B cell (primary cell): ENCODE measurements at regions of chr18 and their contacts with region 1.

Region 1: DNA sequence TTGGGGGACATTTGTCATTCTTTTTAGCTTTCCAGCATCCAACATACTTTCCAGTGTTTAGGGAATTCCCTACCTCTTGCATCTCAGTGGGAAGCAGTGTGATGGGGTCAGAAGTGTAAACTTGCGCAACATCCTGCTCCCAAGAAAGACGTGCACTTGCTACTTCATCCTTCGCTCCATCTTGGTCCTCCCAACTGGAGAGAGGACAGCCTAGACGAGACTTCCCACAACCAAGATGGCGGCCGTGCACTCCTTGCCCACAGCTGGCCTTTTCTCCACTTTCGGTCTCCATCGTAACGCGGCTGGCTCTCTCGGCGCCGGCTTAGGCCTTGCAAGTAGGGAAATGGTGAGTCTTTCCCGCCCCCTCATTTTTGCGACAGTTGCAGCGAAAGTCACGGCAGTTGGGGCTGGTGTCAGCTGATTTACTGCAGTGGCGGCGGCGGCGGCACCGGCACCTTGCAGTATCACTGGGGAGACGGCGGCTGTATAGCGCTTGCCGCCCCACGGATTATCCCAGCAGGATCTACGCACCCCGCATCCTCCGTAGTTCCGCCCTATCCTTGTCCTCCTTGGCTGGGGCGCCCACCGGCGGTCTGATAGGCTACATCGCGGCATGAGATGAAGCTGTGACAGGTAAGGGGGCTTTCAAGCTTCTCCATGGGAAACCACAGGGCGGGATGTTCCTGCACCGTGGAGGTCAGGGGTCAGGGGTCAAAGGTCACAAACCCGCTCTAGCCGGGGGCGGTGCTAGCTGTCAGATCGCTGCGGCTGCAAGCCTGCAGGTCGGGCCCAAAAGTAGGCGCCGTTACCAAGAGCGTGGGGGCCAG is at the start of gene WDR7:
- DNase-seq: peak; percentile 97
- ATAC-seq: peak; percentile 93
- H3K4me3 ChIP-seq: peak within 1 kb of the TSS; percentile 67 to 95 (median 84)
- H3K4me3 Mint-ChIP-seq: peak within 1 kb of the TSS; percentile 92
- H3K27ac ChIP-seq: peak within 1 kb of the TSS; percentile 52 to 88
- H3K27ac Mint-ChIP-seq: peak within 1 kb of the TSS; percentile 88
- H3K4me1 ChIP-seq: peaks cover 19 to 26% of the 10 kb centered on the region in 2 donors
- H3K4me1 Mint-ChIP-seq: peaks cover 38% of the 10 kb centered on the region
- H3K27me3 ChIP-seq: no peaks in the 10 kb centered on the region
- H3K27me3 Mint-ChIP-seq: no peaks in the 10 kb centered on the region
- CTCF ChIP-seq: no peak
- total RNA-seq, gene WDR7: 45.0 and 48.0 TPM in 2 replicates

Region 2: DNA sequence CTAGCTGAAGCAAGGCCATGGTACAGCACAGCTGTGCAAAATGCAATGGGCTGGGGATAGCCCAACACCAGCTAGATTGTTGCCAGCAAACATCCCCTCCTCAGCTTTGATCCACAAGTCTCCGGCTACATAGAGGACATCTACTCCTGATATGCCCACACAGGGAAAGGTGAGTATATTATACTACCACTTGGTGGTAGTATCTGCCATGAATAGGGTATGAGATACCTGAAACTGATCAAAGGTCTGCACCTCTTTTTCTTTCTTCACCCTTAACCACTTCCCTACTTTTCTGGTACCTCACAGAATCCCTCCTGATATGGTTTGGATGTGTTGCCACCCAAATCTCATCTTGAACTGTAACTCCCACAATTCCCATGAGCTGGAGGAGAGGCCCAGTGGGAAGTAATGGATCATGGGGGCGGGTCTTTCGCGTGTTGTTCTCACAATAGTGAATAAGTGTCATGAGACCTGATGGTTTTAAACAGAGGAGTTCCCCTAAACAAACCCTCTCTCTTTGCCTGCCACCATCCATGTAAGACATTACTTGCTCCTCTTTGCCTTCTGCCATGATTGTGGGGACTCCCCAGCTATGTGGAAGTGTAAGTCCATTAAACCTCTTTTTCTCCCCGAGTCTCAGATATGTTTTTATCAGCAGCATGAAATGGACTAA is 292.4 kb before region 1 on chr18:
- CTCF ChIA-PET with region 1: no interaction called
- POLR2A ChIA-PET with region 1: no interaction called
- intact Hi-C with region 1: no loop called
- DNase-seq: no peak
- ATAC-seq: no peak
- H3K4me3 ChIP-seq: no peak overlapping the region
- H3K4me3 Mint-ChIP-seq: no peak overlapping the region
- H3K27ac ChIP-seq: no peak overlapping the region
- H3K27ac Mint-ChIP-seq: no peak overlapping the region
- H3K4me1 ChIP-seq: no peaks in the 10 kb centered on the region
- H3K4me1 Mint-ChIP-seq: no peaks in the 10 kb centered on the region
- H3K27me3 ChIP-seq: no peaks in the 10 kb centered on the region
- H3K27me3 Mint-ChIP-seq: no peaks in the 10 kb centered on the region
- CTCF ChIP-seq: no peak

Region 3: DNA sequence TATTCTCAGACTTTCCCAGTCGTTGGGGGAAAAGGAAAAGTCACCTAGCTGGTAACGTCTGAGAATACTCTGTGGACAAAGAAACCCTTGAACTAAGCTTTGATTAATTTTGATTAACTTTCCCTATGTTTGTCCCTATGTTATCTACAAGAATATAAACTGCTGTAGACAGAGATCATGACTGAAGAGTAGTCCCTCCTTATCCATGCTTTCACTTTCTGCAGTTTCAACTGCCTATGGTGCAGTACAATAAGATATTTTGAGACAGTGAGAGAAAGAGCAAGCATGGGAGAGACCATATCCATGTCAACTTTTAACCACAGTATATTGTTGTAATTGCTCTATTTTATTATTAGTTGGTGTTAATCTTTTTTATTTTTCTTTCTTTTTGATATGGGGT is 44.5 kb before region 1 on chr18:
- CTCF ChIA-PET with region 1: no interaction called
- POLR2A ChIA-PET with region 1: no interaction called
- intact Hi-C with region 1: no loop called
- DNase-seq: no peak
- ATAC-seq: no peak
- H3K4me3 ChIP-seq: no peak overlapping the region
- H3K4me3 Mint-ChIP-seq: no peak overlapping the region
- H3K27ac ChIP-seq: no peak overlapping the region
- H3K27ac Mint-ChIP-seq: no peak overlapping the region
- H3K4me1 ChIP-seq: no peaks in the 10 kb centered on the region
- H3K4me1 Mint-ChIP-seq: no peaks in the 10 kb centered on the region
- H3K27me3 ChIP-seq: no peaks in the 10 kb centered on the region
- H3K27me3 Mint-ChIP-seq: no peaks in the 10 kb centered on the region
- CTCF ChIP-seq: no peak

Region 4: GRCh38 chr18:56638271-56639093 is 12.7 kb before region 1 on chr18 and contains the start of gene TXNL1:
- CTCF ChIA-PET with region 1: interaction called, 19 read pairs
- POLR2A ChIA-PET with region 1: interaction called, 10 read pairs
- intact Hi-C with region 1: loop called (anchors 1 kb)
- DNase-seq: peak; percentile 98
- ATAC-seq: peak; percentile 97
- H3K4me3 ChIP-seq: peak within 1 kb of the TSS; percentile 72 to 97 (median 89)
- H3K4me3 Mint-ChIP-seq: peak within 1 kb of the TSS; percentile 93
- H3K27ac ChIP-seq: peak within 1 kb of the TSS; percentile 92 to 94
- H3K27ac Mint-ChIP-seq: peak within 1 kb of the TSS; percentile 95
- H3K4me1 ChIP-seq: peaks cover 15 to 23% of the 10 kb centered on the region in 2 donors
- H3K4me1 Mint-ChIP-seq: peaks cover 46% of the 10 kb centered on the region
- H3K27me3 ChIP-seq: no peaks in the 10 kb centered on the region
- H3K27me3 Mint-ChIP-seq: no peaks in the 10 kb centered on the region
- CTCF ChIP-seq: no peak
- total RNA-seq, gene TXNL1: 39.8 and 45.4 TPM in 2 replicates

Region 5: DNA sequence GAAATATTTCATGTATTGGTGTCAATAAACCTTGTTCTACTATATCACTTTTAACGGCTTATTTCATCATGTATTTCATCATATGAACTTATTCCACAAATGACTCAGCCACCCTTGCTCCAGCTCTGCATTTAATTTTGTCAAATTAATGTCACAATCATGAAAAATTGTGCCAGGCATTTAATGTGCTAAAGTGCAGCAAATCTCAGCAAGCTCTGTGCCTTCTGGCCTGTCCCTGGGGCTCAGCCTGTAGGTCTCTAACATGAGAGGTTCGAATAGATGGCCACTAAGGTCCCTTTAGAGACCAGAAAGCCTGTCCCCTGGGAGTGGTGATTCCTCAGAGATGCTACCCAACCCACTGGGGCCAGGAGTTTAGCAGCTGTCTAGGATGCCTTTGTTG is 524.4 kb after region 1 on chr18:
- CTCF ChIA-PET with region 1: no interaction called
- POLR2A ChIA-PET with region 1: no interaction called
- intact Hi-C with region 1: no loop called
- DNase-seq: no peak
- ATAC-seq: no peak
- H3K4me3 ChIP-seq: no peak overlapping the region
- H3K4me3 Mint-ChIP-seq: no peak overlapping the region
- H3K27ac ChIP-seq: no peak overlapping the region
- H3K27ac Mint-ChIP-seq: no peak overlapping the region
- H3K4me1 ChIP-seq: no peaks in the 10 kb centered on the region
- H3K4me1 Mint-ChIP-seq: no peaks in the 10 kb centered on the region
- H3K27me3 ChIP-seq: peaks cover 0 to 2% (median 0%) of the 10 kb centered on the region in 4 experiments
- H3K27me3 Mint-ChIP-seq: peaks cover 4% of the 10 kb centered on the region
- CTCF ChIP-seq: no peak

Region 6: DNA sequence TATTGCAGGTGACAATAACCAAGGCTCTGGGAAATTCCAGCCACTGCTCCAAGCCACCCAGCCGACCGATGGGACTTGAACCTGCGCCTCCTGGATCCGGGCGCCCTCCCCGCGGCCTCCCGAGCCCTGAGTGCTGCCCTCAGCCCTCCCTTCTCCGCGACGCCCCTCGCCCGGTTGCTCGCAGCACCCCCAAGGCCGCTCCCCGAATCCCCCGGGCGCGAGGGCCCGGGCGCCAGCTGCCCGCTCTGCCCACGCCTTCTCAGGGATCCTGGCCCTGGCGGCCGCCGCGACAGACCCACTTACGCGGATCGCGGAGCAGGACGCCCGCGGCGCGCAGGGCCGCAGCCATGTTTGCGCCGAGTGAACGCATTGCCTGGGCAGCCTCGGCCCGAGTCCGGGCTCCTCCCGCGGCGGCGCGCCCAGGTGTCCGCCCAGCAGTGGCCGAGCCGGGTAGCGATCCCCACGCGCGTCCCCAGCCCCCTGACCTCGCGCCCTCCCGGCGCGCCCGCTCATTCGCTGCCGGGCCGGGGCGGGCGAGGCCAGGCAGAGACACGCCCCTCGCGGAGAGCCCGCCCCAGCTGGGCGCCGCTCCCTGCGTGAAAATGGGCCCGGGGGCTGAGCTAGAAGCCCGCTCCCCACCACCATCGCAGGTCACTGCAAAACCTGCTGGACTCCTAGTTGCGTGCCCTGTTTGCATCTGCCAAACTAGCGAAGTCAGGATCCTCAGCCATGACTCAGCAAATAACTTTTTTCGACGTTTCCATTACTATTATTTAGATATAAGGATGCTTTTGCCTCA is 935.3 kb after region 1 on chr18 and contains the start of gene FECH:
- CTCF ChIA-PET with region 1: no interaction called
- POLR2A ChIA-PET with region 1: no interaction called
- intact Hi-C with region 1: loop called (anchors 5 kb)
- DNase-seq: peak; percentile 78
- ATAC-seq: peak; percentile 97
- H3K4me3 ChIP-seq: peak within 1 kb of the TSS; percentile 53 to 67 (median 63)
- H3K4me3 Mint-ChIP-seq: peak within 1 kb of the TSS; percentile 89
- H3K27ac ChIP-seq: peak within 1 kb of the TSS in 1 of 2 donors; percentile 70
- H3K27ac Mint-ChIP-seq: peak within 1 kb of the TSS; percentile 79
- H3K4me1 ChIP-seq: peaks cover 17 to 21% of the 10 kb centered on the region in 2 donors
- H3K4me1 Mint-ChIP-seq: peaks cover 18% of the 10 kb centered on the region
- H3K27me3 ChIP-seq: no peaks in the 10 kb centered on the region
- H3K27me3 Mint-ChIP-seq: no peaks in the 10 kb centered on the region
- CTCF ChIP-seq: no peak
- total RNA-seq, gene FECH: 10.4 and 12.6 TPM in 2 replicates

Region 7: GRCh38 chr18:57621246-57621604 is 970.1 kb after region 1 on chr18:
- CTCF ChIA-PET with region 1: no interaction called
- POLR2A ChIA-PET with region 1: no interaction called
- intact Hi-C with region 1: loop called (anchors 10 kb)
- DNase-seq: no peak
- ATAC-seq: peak; percentile 4
- H3K4me3 ChIP-seq: peak overlapping the region; percentile 85 to 90 (median 89)
- H3K4me3 Mint-ChIP-seq: peak overlapping the region; percentile 93
- H3K27ac ChIP-seq: peak overlapping the region; percentile 86 to 88
- H3K27ac Mint-ChIP-seq: peak overlapping the region; percentile 95
- H3K4me1 ChIP-seq: peaks cover 11 to 24% of the 10 kb centered on the region in 2 donors
- H3K4me1 Mint-ChIP-seq: peaks cover 32% of the 10 kb centered on the region
- H3K27me3 ChIP-seq: no peaks in the 10 kb centered on the region
- H3K27me3 Mint-ChIP-seq: no peaks in the 10 kb centered on the region
- CTCF ChIP-seq: no peak